ENCODE measurements at regions of chr6 and their contacts with region 1.

Region 1: DNA sequence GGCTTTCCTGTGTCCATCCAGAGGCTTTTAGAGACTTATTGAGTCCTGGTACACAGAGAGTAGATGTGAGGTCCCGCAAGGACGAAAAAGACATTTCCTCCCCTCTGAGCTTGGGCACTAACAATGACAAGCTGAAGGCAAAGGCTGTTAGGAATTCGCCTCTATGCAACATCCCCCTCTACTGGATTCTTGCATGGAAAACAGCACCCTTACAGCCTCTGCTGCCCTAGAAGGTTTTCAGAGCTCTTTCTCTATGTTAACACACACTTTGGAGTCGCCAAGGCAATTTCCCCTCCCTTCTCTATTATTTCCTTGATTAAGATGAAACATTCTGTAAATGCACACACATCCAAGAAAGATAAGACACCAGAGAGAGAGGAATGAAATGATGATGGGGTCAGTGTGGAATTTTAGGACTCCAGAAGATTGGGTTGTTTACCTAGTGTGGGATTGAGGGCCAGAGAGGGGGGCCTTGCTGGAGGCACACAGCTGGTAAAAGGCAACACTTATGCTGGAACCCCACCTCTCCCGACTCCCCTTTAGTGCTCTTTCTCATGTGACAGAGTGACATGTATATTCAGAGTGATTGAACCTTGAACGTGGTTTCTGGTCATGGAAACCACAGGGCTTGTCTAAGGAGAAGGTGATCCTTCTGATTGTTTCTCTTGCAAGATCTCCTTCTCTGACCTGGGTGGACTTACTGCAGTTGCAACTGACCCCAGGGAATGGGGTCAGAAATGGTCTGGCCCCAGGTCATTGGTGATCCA is 300.7 kb downstream of the CLIC5 start:
- DNase-seq: no peak
- ATAC-seq: peak; percentile 40
- H3K4me3 Mint-ChIP-seq: no peak overlapping the region
- H3K27ac Mint-ChIP-seq: no peak overlapping the region
- H3K4me1 Mint-ChIP-seq: peaks cover 29% of the 10 kb centered on the region
- H3K27me3 Mint-ChIP-seq: no peaks in the 10 kb centered on the region
- CTCF ChIP-seq: no peak

Region 2: DNA sequence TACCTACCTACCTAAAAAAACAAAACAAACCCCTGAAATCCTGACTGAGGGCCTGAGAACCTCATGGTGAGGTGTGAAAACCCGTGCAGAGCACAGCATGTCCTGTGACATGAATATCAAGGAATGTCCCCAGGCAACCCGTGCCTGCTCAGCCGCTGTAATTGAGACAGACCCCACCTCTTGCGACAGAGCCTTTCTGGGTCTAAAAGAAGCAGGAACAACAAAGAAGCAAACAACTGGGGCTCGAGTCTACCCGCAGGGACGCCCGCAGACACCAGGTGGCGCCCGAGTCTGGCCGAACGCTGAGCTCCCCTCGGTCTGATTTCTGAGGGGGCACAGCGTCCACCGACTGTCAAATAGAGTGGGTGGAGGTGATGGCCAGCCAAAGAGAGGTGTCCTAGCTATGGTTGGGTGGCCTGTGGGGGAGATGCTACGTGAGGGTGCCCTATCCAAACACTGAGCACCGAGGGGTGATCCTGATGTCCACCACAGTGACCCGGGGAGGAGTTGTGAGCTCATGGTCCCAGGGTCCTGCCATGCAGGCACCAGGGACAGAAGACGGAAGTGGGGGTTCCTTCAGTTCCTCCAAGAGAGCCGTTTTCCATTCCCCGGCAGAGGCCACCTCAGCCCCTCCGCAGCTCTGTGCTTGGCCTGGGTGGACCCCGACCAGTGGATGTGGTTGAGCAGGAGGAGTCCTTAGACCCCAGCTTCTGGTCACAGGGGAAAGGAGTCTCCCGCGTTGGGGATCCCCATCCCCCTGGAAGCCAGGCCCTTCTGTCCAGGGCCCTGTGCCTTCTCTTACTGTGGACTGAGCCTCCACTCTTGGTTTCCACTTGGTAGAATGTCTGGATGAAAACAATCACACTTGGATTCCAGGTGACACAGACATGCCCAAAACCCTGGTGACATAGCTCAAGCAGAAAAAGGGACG is 1059.2 kb before region 1 on chr6:
- CTCF ChIA-PET with region 1: interaction called, 101 read pairs
- POLR2A ChIA-PET with region 1: interaction called, 3 read pairs
- intact Hi-C with region 1: loop called (anchors 1 kb)
- DNase-seq: peak; percentile 65
- ATAC-seq: peak; percentile 56
- H3K4me3 Mint-ChIP-seq: no peak overlapping the region
- H3K27ac Mint-ChIP-seq: no peak overlapping the region
- H3K4me1 Mint-ChIP-seq: peaks cover 2% of the 10 kb centered on the region
- H3K27me3 Mint-ChIP-seq: peaks cover 24% of the 10 kb centered on the region
- CTCF ChIP-seq: peak; percentile 71

Region 3: GRCh38 chr6:45421709-45422502 is 293.0 kb before region 1 on chr6:
- CTCF ChIA-PET with region 1: interaction called, 14 read pairs
- POLR2A ChIA-PET with region 1: interaction called, 6 read pairs
- intact Hi-C with region 1: loop called (anchors 1 kb)
- DNase-seq: peak; percentile 50
- ATAC-seq: peak; percentile 40
- H3K4me3 Mint-ChIP-seq: peak overlapping the region; percentile 90
- H3K27ac Mint-ChIP-seq: peak overlapping the region; percentile 76
- H3K4me1 Mint-ChIP-seq: peaks cover 54% of the 10 kb centered on the region
- H3K27me3 Mint-ChIP-seq: peaks cover 39% of the 10 kb centered on the region
- CTCF ChIP-seq: no peak

Region 4: DNA sequence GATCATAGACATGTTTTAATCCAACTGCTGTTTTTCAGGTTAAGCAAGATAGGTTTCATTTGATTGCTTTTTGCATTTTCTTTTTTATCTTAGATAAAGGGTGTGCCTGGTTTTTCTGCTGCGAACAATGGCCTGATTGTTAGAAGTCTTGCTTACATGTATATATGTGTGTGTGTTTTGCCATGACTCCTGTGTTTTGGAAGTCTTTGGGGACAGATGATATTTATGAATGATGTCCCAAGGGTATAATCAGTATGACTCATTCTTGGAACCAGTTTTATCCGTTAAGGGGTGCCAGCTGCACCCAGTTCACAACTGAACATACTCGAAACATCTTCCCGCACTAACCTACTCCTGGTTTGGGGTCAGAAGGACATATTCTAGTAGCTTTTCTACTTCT is 107.1 kb before region 1 on chr6:
- CTCF ChIA-PET with region 1: no interaction called
- POLR2A ChIA-PET with region 1: no interaction called
- intact Hi-C with region 1: no loop called
- DNase-seq: no peak
- ATAC-seq: no peak
- H3K4me3 Mint-ChIP-seq: no peak overlapping the region
- H3K27ac Mint-ChIP-seq: no peak overlapping the region
- H3K4me1 Mint-ChIP-seq: peaks cover 7% of the 10 kb centered on the region
- H3K27me3 Mint-ChIP-seq: peaks cover 2% of the 10 kb centered on the region
- CTCF ChIP-seq: no peak

Region 5: GRCh38 chr6:45631395-45631794 is 83.5 kb before region 1 on chr6:
- CTCF ChIA-PET with region 1: no interaction called
- POLR2A ChIA-PET with region 1: no interaction called
- intact Hi-C with region 1: loop called (anchors 5 kb)
- DNase-seq: no peak
- ATAC-seq: no peak
- H3K4me3 Mint-ChIP-seq: no peak overlapping the region
- H3K27ac Mint-ChIP-seq: no peak overlapping the region
- H3K4me1 Mint-ChIP-seq: no peaks in the 10 kb centered on the region
- H3K27me3 Mint-ChIP-seq: no peaks in the 10 kb centered on the region
- CTCF ChIP-seq: no peak

Region 6: DNA sequence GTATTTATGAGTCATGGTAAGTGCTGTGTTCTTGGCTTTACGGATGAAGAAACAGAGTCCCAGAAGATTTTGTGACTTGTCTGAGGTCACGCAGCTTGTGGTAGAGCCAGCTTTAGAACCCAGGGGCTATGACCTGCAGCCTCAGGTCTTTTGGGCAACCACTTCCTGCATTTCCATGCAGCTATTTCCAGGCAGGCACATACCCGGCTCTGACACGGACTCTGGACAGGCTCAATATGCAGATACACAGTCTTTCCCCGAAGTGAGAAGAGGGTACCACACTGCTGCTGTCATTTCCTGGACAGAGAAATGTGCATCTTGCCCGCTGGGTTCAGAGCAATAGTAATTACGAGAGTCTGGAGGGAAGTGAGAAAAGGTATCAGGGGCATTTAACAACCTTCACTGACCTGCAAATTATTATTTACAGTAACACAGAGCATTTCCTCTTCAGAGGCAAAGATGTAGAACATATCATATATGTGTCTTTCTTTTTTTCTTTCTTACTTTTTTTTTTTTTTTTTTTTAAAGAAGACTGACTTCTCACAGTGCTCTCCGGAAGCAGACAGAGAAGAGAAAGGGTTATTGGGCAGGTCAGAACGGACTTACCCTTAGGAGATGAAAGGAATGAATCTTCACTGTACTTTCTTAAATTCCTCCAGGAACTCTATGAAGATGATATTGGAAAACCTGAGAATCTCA is 115.7 kb after region 1 on chr6:
- CTCF ChIA-PET with region 1: interaction called, 3 read pairs
- POLR2A ChIA-PET with region 1: interaction called, 3 read pairs
- intact Hi-C with region 1: loop called (anchors 1 kb)
- DNase-seq: peak; percentile 50
- ATAC-seq: peak; percentile 86
- H3K4me3 Mint-ChIP-seq: peak overlapping the region; percentile 77
- H3K27ac Mint-ChIP-seq: peak overlapping the region; percentile 75
- H3K4me1 Mint-ChIP-seq: peaks cover 34% of the 10 kb centered on the region
- H3K27me3 Mint-ChIP-seq: peaks cover 7% of the 10 kb centered on the region
- CTCF ChIP-seq: no peak

Region 7: DNA sequence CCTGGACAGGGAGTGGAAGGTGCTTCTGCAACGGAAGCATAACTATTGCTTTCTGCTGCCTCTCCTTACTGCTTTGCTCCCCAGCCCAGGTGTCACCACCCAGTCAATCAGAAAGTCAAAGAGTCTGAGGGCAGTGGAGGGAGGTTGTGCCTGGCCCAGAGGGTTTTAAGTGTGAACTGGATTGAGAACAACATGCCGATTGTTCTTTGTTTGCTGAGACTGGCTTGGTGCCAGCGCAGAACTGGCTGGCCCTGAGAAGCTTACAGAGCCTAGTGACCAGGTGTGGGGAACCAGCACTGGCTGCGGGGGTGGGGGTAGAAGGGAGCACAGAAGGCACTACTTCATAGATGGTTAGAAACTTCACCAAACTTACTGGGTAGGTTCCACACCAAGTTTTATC is 383.8 kb after region 1 on chr6:
- CTCF ChIA-PET with region 1: no interaction called
- POLR2A ChIA-PET with region 1: no interaction called
- intact Hi-C with region 1: no loop called
- DNase-seq: no peak
- ATAC-seq: no peak
- H3K4me3 Mint-ChIP-seq: no peak overlapping the region
- H3K27ac Mint-ChIP-seq: no peak overlapping the region
- H3K4me1 Mint-ChIP-seq: peaks cover 1% of the 10 kb centered on the region
- H3K27me3 Mint-ChIP-seq: no peaks in the 10 kb centered on the region
- CTCF ChIP-seq: no peak

Measured in activated B cell treated with CpG ODN at 0.5 μM for 24 hours (primary cell).